Common myeloid progenitor, CD34-positive (primary cell): ENCODE measurements at regions of chr17 and their contacts with region 1.

Region 1: DNA sequence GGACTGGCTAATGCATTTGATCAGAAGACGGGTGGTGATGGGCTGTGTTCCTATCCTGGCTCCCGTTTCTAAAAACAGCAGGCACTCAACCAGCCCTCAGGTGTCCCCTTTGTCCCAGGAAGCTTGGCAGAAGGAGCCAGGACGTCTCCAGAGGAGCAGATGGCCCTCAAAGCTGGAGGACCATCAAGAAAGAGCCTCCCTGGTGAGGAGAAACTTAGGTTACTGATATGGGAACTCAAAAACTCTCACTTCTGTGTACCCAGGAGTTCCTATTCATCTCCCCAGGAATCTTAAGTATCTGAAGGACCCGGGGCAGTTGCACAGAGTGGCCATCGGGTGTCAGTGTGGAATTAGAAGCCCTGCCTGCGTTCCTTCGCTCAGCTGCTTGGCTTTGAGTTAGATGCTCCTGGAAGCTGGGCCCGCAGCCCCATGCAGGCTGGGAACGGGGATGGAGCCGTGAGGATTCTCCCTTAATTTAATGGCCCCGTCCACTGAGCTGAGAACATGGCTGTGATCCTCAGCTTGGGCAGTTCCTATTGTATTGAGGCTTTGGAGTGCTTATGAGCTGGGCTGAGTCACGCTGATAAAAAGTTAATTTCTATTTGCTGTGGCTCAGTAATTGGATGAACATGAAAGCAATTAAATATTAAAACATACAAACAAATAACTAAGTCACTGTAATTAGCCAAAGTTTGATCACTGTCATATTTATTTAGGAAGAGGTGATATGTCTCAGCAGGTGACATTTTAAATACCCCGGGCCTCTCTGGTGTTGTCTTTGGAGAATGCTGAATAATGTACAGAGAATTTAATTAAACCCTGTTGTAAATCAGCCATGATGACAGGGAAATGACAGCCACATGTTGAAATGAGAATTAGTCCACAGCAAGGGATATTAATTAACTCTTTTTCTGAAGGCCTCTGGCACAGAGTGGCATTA is 402.1 kb downstream of the SEC14L1 start:
- DNase-seq: peak; percentile 74 to 83 (median 79)
- H3K4me3 ChIP-seq: no peak overlapping the region
- H3K27ac ChIP-seq: no peak overlapping the region
- H3K4me1 ChIP-seq: peaks cover 0 to 34% (median 17%) of the 10 kb centered on the region in 4 experiments
- H3K27me3 ChIP-seq: no peaks in the 10 kb centered on the region

Region 2: GRCh38 chr17:77523540-77523939 is 19.3 kb before region 1 on chr17:
- CTCF ChIA-PET with region 1: interaction called, 10 read pairs
- POLR2A ChIA-PET with region 1: no interaction called
- DNase-seq: no peak
- H3K4me3 ChIP-seq: no peak overlapping the region
- H3K27ac ChIP-seq: no peak overlapping the region
- H3K4me1 ChIP-seq: peaks cover 0 to 7% (median 3%) of the 10 kb centered on the region in 4 experiments
- H3K27me3 ChIP-seq: peaks cover 0 to 21% (median 7%) of the 10 kb centered on the region in 5 experiments

Region 3: GRCh38 chr17:77601054-77601964 is 58.5 kb after region 1 on chr17:
- CTCF ChIA-PET with region 1: interaction called, 10 read pairs
- POLR2A ChIA-PET with region 1: no interaction called
- DNase-seq: peak in 2 of 3 donors; percentile 43 to 44
- H3K4me3 ChIP-seq: peak overlapping the region in 1 of 7 experiments; percentile 20
- H3K27ac ChIP-seq: no peak overlapping the region
- H3K4me1 ChIP-seq: peaks cover 0 to 31% (median 11%) of the 10 kb centered on the region in 4 experiments
- H3K27me3 ChIP-seq: no peaks in the 10 kb centered on the region

Region 4: DNA sequence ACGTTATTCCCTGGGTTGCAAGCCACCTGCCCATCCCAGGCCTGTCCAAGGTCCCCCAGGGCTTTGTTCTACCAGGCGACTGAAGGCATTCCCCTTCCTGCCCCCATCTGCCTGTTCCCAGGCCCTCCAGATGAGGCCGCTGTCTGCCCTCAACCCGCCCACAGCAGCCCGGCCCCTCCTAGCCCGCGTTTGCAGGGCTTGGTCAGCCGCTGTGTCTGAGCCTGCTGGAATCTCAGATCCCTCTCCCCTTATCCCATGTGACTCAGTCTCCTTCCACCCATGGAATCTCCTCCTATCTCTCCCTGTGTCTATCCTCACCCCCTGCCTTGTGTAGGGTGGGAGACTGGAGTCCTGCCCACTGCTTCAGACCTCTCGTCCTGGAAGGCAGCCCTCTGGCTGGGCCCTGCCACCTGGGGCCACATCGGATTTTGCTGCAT is 229.7 kb after region 1 on chr17:
- CTCF ChIA-PET with region 1: interaction called, 25 read pairs
- POLR2A ChIA-PET with region 1: no interaction called
- DNase-seq: peak; percentile 48 to 63 (median 61)
- H3K4me3 ChIP-seq: no peak overlapping the region
- H3K27ac ChIP-seq: no peak overlapping the region
- H3K4me1 ChIP-seq: peaks cover 0 to 3% (median 0%) of the 10 kb centered on the region in 4 experiments
- H3K27me3 ChIP-seq: peaks cover 0 to 5% (median 0%) of the 10 kb centered on the region in 5 experiments